Gastrocnemius medialis (tissue), 4 donors: ENCODE measurements at regions of chr1 and their contacts with region 1.

Region 1: DNA sequence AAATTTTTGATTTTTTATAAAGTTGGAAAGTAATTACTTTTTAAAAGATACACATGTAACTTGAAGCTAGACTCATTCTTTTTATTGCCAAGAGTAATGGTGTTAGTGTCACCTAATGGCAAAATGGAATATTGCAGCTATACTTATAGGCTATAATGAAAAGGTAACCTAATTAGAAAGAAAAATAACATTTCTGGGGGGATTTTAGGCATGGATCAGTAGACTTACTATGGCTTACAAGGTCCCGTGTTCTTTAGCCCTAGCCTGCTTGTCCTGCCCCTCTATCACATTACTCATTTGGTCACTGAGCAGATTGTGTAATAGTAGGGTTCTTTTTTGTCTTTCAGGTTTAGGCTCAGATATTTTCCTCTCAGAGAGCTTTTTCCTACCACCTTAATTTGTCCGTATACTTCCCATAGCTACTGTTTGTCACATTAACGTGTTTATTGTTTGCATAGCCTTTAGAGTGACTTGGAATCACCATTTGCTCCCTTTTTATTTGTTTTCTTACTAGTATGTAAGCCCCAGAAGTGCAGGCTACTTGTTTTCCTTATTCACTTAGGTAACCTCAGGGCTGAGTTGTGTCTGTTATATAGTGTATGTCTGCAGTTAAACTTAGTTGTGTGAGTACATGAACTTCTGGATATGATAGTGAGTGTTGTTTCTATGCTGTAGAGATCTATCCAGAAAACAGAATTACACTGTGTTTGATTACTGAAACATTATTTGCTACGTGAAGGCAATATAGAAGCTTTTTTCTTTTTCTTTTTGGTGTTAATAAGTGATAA is 58.7 kb downstream of the RABGAP1L start:
- DNase-seq: no peak
- ATAC-seq: peak; percentile 58 to 64
- H3K4me3 ChIP-seq: no peak overlapping the region
- H3K27ac ChIP-seq: no peak overlapping the region
- H3K4me1 ChIP-seq: peaks cover 0 to 8% of the 10 kb centered on the region in 2 donors
- H3K27me3 ChIP-seq: no peaks in the 10 kb centered on the region
- CTCF ChIP-seq: peak; percentile 44 to 78 (median 68)
- POLR2A ChIP-seq: no peak

Region 2: DNA sequence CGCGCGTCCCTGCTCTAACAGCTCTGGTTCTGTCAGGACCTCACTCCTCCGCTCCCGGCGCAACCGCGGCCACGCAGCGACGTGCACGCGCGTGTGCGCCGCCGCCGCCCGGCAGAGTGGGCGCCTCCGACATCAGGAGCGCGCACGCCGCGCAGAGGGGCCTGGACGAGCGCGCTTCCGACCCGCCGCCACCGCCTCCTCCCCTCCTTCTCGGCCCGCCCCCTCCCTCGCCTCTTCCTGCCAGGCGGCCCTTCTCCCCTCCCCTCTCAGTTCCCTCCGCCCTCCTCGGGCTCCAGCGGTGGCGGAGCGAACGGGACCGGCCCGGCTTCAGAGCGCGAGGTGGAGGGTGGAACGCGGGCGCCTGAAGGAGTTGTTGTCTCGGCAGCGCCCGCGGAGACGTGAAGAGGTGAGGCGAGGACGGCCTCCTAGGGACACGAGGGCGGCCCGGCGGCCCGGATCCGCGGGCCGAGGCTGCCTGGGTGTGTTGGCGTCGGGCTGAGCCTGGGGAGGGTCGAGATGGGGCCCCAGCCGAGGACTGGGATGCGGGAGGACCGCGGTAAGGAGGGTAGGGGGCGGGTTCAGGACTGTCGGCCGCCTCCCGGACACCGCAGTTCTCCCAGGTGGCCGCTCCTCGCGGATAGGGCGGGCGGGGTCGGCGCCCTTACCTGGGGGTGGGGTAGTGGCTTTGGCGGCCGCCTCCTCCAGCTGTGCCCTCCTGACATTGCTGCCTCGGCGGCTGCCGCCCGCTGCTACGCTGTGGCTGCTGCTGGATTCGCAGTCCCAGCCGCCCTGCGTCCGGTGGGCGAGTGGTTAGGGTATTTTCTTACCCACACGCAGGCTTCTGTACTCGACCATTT is 58.5 kb before region 1 on chr1 and contains the start of gene RABGAP1L:
- in situ Hi-C with region 1: no loop called
- intact Hi-C with region 1: loop called (anchors 2 kb)
- DNase-seq: peak; percentile 88 to 90
- ATAC-seq: peak; percentile 94
- H3K4me3 ChIP-seq: peak within 1 kb of the TSS; percentile 90 to 100 (median 93)
- H3K27ac ChIP-seq: peak within 1 kb of the TSS; percentile 92 to 98 (median 94)
- H3K4me1 ChIP-seq: peaks cover 3 to 11% of the 10 kb centered on the region in 2 donors
- H3K27me3 ChIP-seq: no peaks in the 10 kb centered on the region
- CTCF ChIP-seq: peak in 2 of 5 experiments; percentile 9 to 17
- POLR2A ChIP-seq: peak; percentile 73 to 79
- total RNA-seq, gene RABGAP1L: 8.8 to 22.2 (median 14.9) TPM

Region 3: DNA sequence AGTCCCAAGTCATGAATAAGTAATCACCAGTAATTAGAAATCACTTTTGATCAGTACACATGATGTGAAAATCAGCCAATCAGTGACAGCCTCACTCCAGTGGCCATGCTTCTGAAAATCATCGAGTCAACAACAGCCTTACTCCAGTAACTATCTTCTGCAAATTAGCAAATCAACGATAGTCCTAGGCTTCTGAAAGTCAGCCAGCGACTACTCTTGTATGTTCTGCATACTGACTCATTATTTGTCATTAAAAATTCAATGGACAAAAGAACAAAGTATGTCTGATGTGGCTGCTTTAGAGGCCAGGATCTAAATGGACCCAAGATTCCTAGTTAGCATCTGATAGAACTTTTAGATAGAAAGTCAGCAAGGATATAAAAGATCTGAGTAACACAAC is 332.3 kb after region 1 on chr1:
- in situ Hi-C with region 1: no loop called
- intact Hi-C with region 1: no loop called
- DNase-seq: no peak
- ATAC-seq: no peak
- H3K4me3 ChIP-seq: no peak overlapping the region
- H3K27ac ChIP-seq: no peak overlapping the region
- H3K4me1 ChIP-seq: no peaks in the 10 kb centered on the region
- H3K27me3 ChIP-seq: no peaks in the 10 kb centered on the region
- CTCF ChIP-seq: no peak
- POLR2A ChIP-seq: no peak